Endothelial cell of umbilical vein (primary cell): ENCODE measurements at regions of chr19 and their contacts with region 1.

Region 1: DNA sequence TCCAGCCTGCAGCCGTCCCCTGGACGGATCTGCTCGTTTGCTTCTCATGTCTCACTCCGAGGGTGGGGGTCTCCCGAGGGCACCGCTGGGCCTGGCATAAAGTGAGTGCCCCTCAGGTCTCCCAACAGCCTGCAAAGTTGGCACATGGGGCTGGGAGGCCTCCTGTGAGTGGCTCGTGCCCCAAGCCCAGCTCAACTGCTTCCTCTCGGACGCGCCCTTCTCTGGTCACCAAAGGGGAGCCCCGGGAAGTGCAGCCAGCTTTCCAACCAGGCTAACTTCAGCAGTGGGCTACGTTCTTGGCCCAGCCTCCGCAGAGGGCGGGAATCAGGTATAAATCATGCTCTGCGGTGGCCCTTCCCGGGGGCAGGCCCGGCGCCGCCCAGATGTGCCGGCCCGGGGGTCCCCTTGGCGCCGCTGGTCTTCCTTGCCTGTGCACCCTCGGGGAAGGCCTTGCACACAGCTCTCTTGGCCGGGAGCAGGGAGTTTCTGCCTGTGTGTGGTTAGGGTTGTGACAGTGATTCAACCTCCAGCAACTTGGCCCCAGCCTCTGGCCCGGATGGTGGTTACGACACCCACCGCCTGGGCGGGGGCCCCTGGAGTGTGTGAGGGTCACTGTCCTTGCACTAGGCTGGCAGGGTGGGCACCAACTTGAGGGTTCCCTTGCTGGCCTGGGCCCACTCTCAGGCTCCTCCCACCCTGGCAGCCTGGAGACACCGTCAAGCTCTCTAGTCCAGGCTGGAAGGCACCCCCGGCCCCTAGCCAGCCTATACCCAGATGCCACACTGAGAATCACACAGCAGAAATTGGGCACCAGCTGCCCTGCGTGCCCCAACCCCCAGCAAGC is 20.7 kb downstream of the CEBPG start:
- DNase-seq: no peak
- H3K4me3 ChIP-seq: no peak overlapping the region
- H3K27ac ChIP-seq: no peak overlapping the region
- H3K4me1 ChIP-seq: peaks cover 19% of the 10 kb centered on the region
- H3K27me3 ChIP-seq: no peaks in the 10 kb centered on the region
- CTCF ChIP-seq: no peak
- POLR2A ChIP-seq: no peak

Region 2: GRCh38 chr19:33302175-33302973 is 91.9 kb before region 1 on chr19 and contains the start of gene CEBPA:
- CTCF ChIA-PET with region 1: interaction called, 4 read pairs
- POLR2A ChIA-PET with region 1: no interaction called
- dilution Hi-C with region 1: no loop called
- intact Hi-C with region 1: loop called (anchors 5 kb)
- DNase-seq: peak; percentile 60
- H3K4me3 ChIP-seq: peak within 1 kb of the TSS; percentile 40 to 64 (median 58)
- H3K27ac ChIP-seq: no peak within 1 kb of the TSS
- H3K4me1 ChIP-seq: peaks cover 9% of the 10 kb centered on the region
- H3K27me3 ChIP-seq: peaks cover 25 to 46% of the 10 kb centered on the region in 2 experiments
- CTCF ChIP-seq: peak; percentile 42 to 52
- POLR2A ChIP-seq: no peak
- total RNA-seq, gene CEBPA: not detected in 2 replicates

Region 3: GRCh38 chr19:33325920-33326319 is 68.3 kb before region 1 on chr19:
- CTCF ChIA-PET with region 1: no interaction called
- POLR2A ChIA-PET with region 1: no interaction called
- dilution Hi-C with region 1: no loop called
- intact Hi-C with region 1: no loop called
- DNase-seq: no peak
- H3K4me3 ChIP-seq: no peak overlapping the region
- H3K27ac ChIP-seq: no peak overlapping the region
- H3K4me1 ChIP-seq: no peaks in the 10 kb centered on the region
- H3K27me3 ChIP-seq: no peaks in the 10 kb centered on the region
- CTCF ChIP-seq: no peak
- POLR2A ChIP-seq: no peak

Region 4: GRCh38 chr19:33373701-33374421 is 20.4 kb before region 1 on chr19 and contains the start of gene CEBPG:
- CTCF ChIA-PET with region 1: interaction called, 6 read pairs
- POLR2A ChIA-PET with region 1: interaction called, 3 read pairs
- dilution Hi-C with region 1: no loop called
- intact Hi-C with region 1: loop called (anchors 2 kb)
- DNase-seq: peak; percentile 54
- H3K4me3 ChIP-seq: peak within 1 kb of the TSS; percentile 81 to 97 (median 94)
- H3K27ac ChIP-seq: peak within 1 kb of the TSS; percentile 96
- H3K4me1 ChIP-seq: peaks cover 46% of the 10 kb centered on the region
- H3K27me3 ChIP-seq: peaks cover 0 to 1% of the 10 kb centered on the region in 2 experiments
- CTCF ChIP-seq: peak; percentile 23 to 26
- POLR2A ChIP-seq: no peak
- total RNA-seq, gene CEBPG: 24.3 and 24.6 TPM in 2 replicates

Region 5: GRCh38 chr19:33416307-33417215 is 22.3 kb after region 1 on chr19:
- CTCF ChIA-PET with region 1: interaction called, 18 read pairs
- POLR2A ChIA-PET with region 1: no interaction called
- dilution Hi-C with region 1: no loop called
- intact Hi-C with region 1: no loop called
- DNase-seq: peak; percentile 62
- H3K4me3 ChIP-seq: no peak overlapping the region
- H3K27ac ChIP-seq: no peak overlapping the region
- H3K4me1 ChIP-seq: no peaks in the 10 kb centered on the region
- H3K27me3 ChIP-seq: no peaks in the 10 kb centered on the region
- CTCF ChIP-seq: peak; percentile 72 to 79
- POLR2A ChIP-seq: no peak

Region 6: GRCh38 chr19:33438007-33438671 is 43.9 kb after region 1 on chr19:
- CTCF ChIA-PET with region 1: no interaction called
- POLR2A ChIA-PET with region 1: no interaction called
- dilution Hi-C with region 1: no loop called
- intact Hi-C with region 1: no loop called
- DNase-seq: no peak
- H3K4me3 ChIP-seq: no peak overlapping the region
- H3K27ac ChIP-seq: no peak overlapping the region
- H3K4me1 ChIP-seq: peaks cover 6% of the 10 kb centered on the region
- H3K27me3 ChIP-seq: no peaks in the 10 kb centered on the region
- CTCF ChIP-seq: peak; percentile 15 to 41
- POLR2A ChIP-seq: no peak

Region 7: DNA sequence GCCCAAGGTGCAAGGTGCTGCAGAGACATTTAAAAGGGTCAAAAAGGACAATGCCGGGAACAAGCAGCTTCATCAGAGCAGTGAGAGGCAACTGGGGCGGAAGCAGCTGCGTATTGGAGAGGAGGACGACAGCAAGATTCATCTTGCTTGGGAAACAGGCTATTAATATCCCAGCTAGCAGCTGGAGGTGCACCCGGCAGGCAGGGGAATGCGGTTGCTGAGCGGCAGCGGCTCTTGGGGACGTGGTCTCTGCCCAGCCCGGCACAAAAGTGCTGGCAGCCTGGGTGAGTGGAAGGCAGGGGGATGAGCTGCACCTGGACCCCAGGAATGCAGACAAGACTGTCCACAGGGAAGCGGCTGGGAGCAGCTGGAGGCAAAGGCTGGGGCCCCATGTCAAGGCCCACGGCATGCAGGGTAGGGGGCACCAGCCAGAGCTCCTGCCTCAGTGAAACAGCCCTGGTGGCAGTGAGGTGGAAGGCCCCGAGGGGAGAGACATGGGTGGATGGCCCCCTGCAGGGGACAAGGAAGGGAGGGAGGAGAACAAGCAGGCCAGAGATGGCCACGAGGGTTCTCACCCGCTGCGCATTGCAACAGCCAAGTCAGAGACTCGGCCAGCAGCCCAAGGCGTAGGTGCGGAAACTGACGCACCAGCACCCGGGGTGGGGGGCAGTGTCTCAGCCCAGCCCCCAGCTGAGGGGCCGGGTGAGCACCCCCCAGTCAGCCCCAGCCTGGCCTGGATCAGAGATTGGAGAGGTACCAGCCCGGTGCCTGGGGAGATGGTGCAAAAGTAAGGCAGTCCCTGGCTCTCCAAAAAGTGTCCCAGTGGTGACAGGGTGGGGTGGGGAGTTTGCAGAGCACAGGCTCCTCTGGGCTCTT is 92.9 kb after region 1 on chr19:
- CTCF ChIA-PET with region 1: no interaction called
- POLR2A ChIA-PET with region 1: no interaction called
- dilution Hi-C with region 1: no loop called
- intact Hi-C with region 1: no loop called
- DNase-seq: no peak
- H3K4me3 ChIP-seq: no peak overlapping the region
- H3K27ac ChIP-seq: no peak overlapping the region
- H3K4me1 ChIP-seq: peaks cover 4% of the 10 kb centered on the region
- H3K27me3 ChIP-seq: no peaks in the 10 kb centered on the region
- CTCF ChIP-seq: no peak
- POLR2A ChIP-seq: no peak